ENCODE measurements at regions of chr20 and their contacts with region 1.

Region 1: DNA sequence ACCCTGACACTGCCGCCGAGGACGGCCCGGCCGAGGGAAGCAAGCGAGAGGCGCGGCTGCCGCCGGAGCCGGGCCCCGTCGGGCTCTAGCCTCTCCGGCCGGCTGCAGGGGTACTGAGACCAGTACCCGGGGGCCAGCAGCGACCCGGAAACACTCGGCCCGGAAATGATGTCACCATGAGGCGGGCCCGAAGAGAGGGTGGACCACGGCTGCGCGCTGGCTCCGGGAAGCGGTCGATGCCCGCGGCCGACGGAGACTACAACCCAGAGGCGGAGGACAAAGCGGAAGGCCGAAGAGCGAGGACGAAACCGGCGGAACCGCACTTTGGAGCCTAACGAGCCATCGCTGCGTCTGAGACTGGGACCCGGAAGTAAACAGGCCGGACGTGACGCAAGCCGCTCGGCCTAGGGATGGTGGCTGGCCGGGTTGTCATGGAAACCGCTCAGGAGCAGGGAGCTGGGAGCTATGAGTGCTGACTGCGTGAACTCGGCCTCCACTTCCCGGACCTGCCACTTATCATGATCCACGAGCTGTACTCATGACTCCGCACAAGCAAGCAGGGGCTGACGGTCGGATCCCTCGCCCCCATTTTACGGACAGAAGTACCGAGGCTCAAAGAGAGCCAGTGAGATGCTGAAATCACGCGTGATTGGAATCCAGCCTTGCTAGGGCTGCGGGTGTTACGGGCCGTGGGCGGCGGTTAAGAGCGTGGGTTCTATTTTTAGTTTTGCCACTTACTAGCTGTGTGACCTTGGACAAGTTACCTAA is at the start of gene SPATA2:
- DNase-seq: peak; percentile 99
- H3K4me3 ChIP-seq: peak within 1 kb of the TSS; percentile 95 to 100 (median 100)
- H3K27ac ChIP-seq: peak within 1 kb of the TSS; percentile 95 to 100 (median 98)
- H3K4me1 ChIP-seq: peaks cover 0 to 40% (median 26%) of the 10 kb centered on the region in 4 donors
- H3K27me3 ChIP-seq: no peaks in the 10 kb centered on the region
- CTCF ChIP-seq: no peak
- EP300 ChIP-seq: peak in 1 of 4 donors; percentile 13
- POLR2A ChIP-seq: peak; percentile 52 to 66
- total RNA-seq, gene SPATA2: 2.1 to 4.7 (median 2.7) TPM

Region 2: GRCh38 chr20:49631061-49631788 is 284.3 kb before region 1 on chr20:
- intact Hi-C with region 1: loop called (anchors 10 kb)
- DNase-seq: no peak
- H3K4me3 ChIP-seq: no peak overlapping the region
- H3K27ac ChIP-seq: peak overlapping the region in 3 of 4 donors; percentile 42 to 60 (median 45)
- H3K4me1 ChIP-seq: peaks cover 0 to 46% (median 36%) of the 10 kb centered on the region in 4 donors
- H3K27me3 ChIP-seq: no peaks in the 10 kb centered on the region
- CTCF ChIP-seq: no peak
- EP300 ChIP-seq: no peak
- POLR2A ChIP-seq: no peak

Region 3: DNA sequence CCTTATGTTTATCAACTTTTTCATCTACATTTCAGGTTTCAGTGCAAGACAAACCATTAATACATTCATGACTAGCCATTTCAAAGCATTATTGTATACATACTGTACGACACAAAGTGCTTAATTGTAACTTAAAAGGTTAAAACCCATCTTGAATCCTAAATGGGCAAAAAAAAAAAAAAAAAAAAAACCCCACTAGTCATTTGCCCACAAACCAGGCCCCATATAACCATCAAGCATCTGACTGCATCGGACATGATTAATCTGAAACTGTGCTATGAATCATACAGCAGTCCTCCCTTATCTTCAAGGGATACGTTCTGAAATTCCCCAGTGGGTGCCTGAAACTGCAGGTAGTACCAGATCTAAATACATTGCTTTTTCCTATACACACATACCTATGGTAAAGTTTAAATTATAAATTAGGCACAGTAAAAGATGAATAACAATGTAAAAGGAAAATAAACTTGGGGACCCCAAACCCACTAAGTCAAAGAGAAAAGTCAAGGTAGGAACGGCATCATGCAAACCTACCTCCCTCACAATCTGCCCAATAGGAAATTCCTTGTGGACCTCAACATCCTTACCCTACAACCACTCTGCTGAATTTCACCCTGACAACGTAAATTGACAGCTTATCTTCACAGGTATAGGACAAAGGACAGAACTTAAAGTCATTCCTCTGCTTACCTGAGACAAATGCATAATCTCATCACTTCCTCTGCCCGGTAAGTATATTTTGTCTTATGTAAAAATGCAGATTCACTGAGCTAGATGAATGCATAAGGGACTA is 216.2 kb before region 1 on chr20:
- intact Hi-C with region 1: no loop called
- DNase-seq: no peak
- H3K4me3 ChIP-seq: no peak overlapping the region
- H3K27ac ChIP-seq: no peak overlapping the region
- H3K4me1 ChIP-seq: peaks cover 0 to 66% (median 62%) of the 10 kb centered on the region in 4 donors
- H3K27me3 ChIP-seq: no peaks in the 10 kb centered on the region
- CTCF ChIP-seq: no peak
- EP300 ChIP-seq: no peak
- POLR2A ChIP-seq: no peak

Region 4: GRCh38 chr20:49948809-49949548 is 33.4 kb after region 1 on chr20:
- intact Hi-C with region 1: no loop called
- DNase-seq: peak; percentile 42
- H3K4me3 ChIP-seq: no peak overlapping the region
- H3K27ac ChIP-seq: no peak overlapping the region
- H3K4me1 ChIP-seq: peaks cover 0 to 3% (median 0%) of the 10 kb centered on the region in 4 donors
- H3K27me3 ChIP-seq: no peaks in the 10 kb centered on the region
- CTCF ChIP-seq: no peak
- EP300 ChIP-seq: no peak
- POLR2A ChIP-seq: no peak

Region 5: GRCh38 chr20:50020288-50020687 is 104.7 kb after region 1 on chr20:
- intact Hi-C with region 1: no loop called
- DNase-seq: no peak
- H3K4me3 ChIP-seq: no peak overlapping the region
- H3K27ac ChIP-seq: peak overlapping the region in 3 of 4 donors; percentile 26 to 78 (median 65)
- H3K4me1 ChIP-seq: peaks cover 0 to 21% (median 15%) of the 10 kb centered on the region in 4 donors
- H3K27me3 ChIP-seq: no peaks in the 10 kb centered on the region
- CTCF ChIP-seq: no peak
- EP300 ChIP-seq: no peak
- POLR2A ChIP-seq: no peak

Measured in sigmoid colon (tissue), 7 donors.